ENCODE measurements at regions of chr6 and their contacts with region 1.

Region 1: GRCh38 chr6:34161857-34162515 is 16.1 kb upstream of the GRM4 start:
- DNase-seq: peak in 1 of 2 donors; percentile 48
- H3K4me3 ChIP-seq: no peak overlapping the region
- H3K27ac ChIP-seq: no peak overlapping the region
- H3K4me1 ChIP-seq: no peaks in the 10 kb centered on the region
- H3K27me3 ChIP-seq: no peaks in the 10 kb centered on the region
- CTCF ChIP-seq: no peak

Region 2: GRCh38 chr6:34602318-34603111 is 440.5 kb after region 1 on chr6:
- intact Hi-C with region 1: loop called (anchors 10 kb)
- DNase-seq: no peak
- H3K4me3 ChIP-seq: no peak overlapping the region
- H3K27ac ChIP-seq: no peak overlapping the region
- H3K4me1 ChIP-seq: peaks cover 5 to 19% of the 10 kb centered on the region in 2 donors
- H3K27me3 ChIP-seq: no peaks in the 10 kb centered on the region
- CTCF ChIP-seq: no peak

Measured in ascending aorta (tissue), 2 donors.